CD4-positive, alpha-beta T cell (primary cell): ENCODE measurements at regions of chr3 and their contacts with region 1.

Region 1: DNA sequence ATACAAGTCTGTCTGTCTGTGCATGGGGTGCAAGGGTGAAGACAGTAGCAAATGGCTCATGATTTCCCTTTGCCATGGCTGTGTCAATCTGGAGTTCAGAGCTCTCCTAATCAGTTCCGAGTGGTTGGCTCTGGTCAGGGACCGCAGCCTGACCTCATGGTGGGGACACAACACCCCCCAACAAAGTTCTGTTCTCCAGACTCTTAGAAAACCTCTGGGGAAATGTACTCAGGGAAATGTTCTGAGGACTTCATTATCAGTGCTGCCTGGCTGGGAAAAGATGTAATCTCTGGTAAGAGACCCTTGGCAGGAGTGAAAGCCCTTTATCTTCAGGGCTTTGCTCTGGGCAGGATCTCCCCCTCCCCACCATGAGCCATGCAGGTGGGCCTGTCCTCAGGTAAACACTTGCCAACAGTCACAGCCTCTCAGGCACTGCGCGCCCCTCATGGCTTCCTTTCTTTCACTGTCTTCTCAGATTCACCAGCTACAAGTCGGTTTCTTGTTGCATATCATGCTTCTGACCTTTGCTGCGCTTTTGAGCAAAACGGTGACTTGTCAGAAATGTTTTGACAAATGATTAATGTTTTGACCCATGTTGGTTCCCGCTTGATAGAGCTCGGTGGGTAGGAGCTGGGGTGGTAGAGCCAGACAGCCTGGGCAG is 95.5 kb downstream of the ST6GAL1 start:
- DNase-seq: peak in 9 of 14 experiments; percentile 28 to 64 (median 38)
- ATAC-seq: peak; percentile 2
- H3K4me3 ChIP-seq: peak overlapping the region; percentile 72
- H3K4me3 Mint-ChIP-seq: peak overlapping the region; percentile 89
- H3K27ac ChIP-seq: peak overlapping the region; percentile 72 to 87
- H3K27ac Mint-ChIP-seq: peak overlapping the region; percentile 98
- H3K4me1 ChIP-seq: peaks cover 62% of the 10 kb centered on the region
- H3K4me1 Mint-ChIP-seq: peaks cover 69% of the 10 kb centered on the region
- H3K27me3 ChIP-seq: no peaks in the 10 kb centered on the region
- H3K27me3 Mint-ChIP-seq: no peaks in the 10 kb centered on the region
- CTCF ChIP-seq: no peak

Region 2: GRCh38 chr3:186514296-186515002 is 511.3 kb before region 1 on chr3:
- CTCF ChIA-PET with region 1: no interaction called
- POLR2A ChIA-PET with region 1: no interaction called
- intact Hi-C with region 1: no loop called
- DNase-seq: peak in 1 of 14 experiments; percentile 25
- ATAC-seq: no peak
- H3K4me3 ChIP-seq: no peak overlapping the region
- H3K4me3 Mint-ChIP-seq: no peak overlapping the region
- H3K27ac ChIP-seq: no peak overlapping the region
- H3K27ac Mint-ChIP-seq: peak overlapping the region; percentile 21
- H3K4me1 ChIP-seq: peaks cover 52% of the 10 kb centered on the region
- H3K4me1 Mint-ChIP-seq: peaks cover 63% of the 10 kb centered on the region
- H3K27me3 ChIP-seq: no peaks in the 10 kb centered on the region
- H3K27me3 Mint-ChIP-seq: no peaks in the 10 kb centered on the region
- CTCF ChIP-seq: no peak

Region 3: GRCh38 chr3:186849374-186849975 is 176.3 kb before region 1 on chr3:
- CTCF ChIA-PET with region 1: interaction called, 6 read pairs
- POLR2A ChIA-PET with region 1: interaction called, 15 read pairs
- intact Hi-C with region 1: loop called in 1 of 2 experiments (anchors 2 kb)
- DNase-seq: peak in 4 of 14 experiments; percentile 24 to 81 (median 76)
- ATAC-seq: peak; percentile 99
- H3K4me3 ChIP-seq: no peak overlapping the region
- H3K4me3 Mint-ChIP-seq: no peak overlapping the region
- H3K27ac ChIP-seq: no peak overlapping the region
- H3K27ac Mint-ChIP-seq: peak overlapping the region; percentile 1
- H3K4me1 ChIP-seq: peaks cover 3% of the 10 kb centered on the region
- H3K4me1 Mint-ChIP-seq: peaks cover 12% of the 10 kb centered on the region
- H3K27me3 ChIP-seq: peaks cover 0 to 4% of the 10 kb centered on the region in 2 experiments
- H3K27me3 Mint-ChIP-seq: peaks cover 5% of the 10 kb centered on the region
- CTCF ChIP-seq: peak; percentile 75

Region 4: GRCh38 chr3:187000711-187001151 is 25.1 kb before region 1 on chr3:
- CTCF ChIA-PET with region 1: interaction called, 3 read pairs
- POLR2A ChIA-PET with region 1: interaction called, 36 read pairs
- intact Hi-C with region 1: no loop called
- DNase-seq: peak in 3 of 14 experiments; percentile 36 to 47 (median 39)
- ATAC-seq: no peak
- H3K4me3 ChIP-seq: no peak overlapping the region
- H3K4me3 Mint-ChIP-seq: peak overlapping the region; percentile 11
- H3K27ac ChIP-seq: peak overlapping the region in 1 of 2 donors; percentile 18
- H3K27ac Mint-ChIP-seq: peak overlapping the region; percentile 72
- H3K4me1 ChIP-seq: peaks cover 40% of the 10 kb centered on the region
- H3K4me1 Mint-ChIP-seq: peaks cover 74% of the 10 kb centered on the region
- H3K27me3 ChIP-seq: no peaks in the 10 kb centered on the region
- H3K27me3 Mint-ChIP-seq: no peaks in the 10 kb centered on the region
- CTCF ChIP-seq: no peak

Region 5: GRCh38 chr3:187041362-187042307 is 15.8 kb after region 1 on chr3:
- CTCF ChIA-PET with region 1: interaction called, 17 read pairs
- POLR2A ChIA-PET with region 1: interaction called, 180 read pairs
- intact Hi-C with region 1: loop called (anchors 1 to 2 kb)
- DNase-seq: peak in 12 of 14 experiments; percentile 24 to 84 (median 54)
- ATAC-seq: peak; percentile 96
- H3K4me3 ChIP-seq: no peak overlapping the region
- H3K4me3 Mint-ChIP-seq: peak overlapping the region; percentile 40
- H3K27ac ChIP-seq: peak overlapping the region; percentile 75 to 84
- H3K27ac Mint-ChIP-seq: peak overlapping the region; percentile 93
- H3K4me1 ChIP-seq: peaks cover 70% of the 10 kb centered on the region
- H3K4me1 Mint-ChIP-seq: peaks cover 83% of the 10 kb centered on the region
- H3K27me3 ChIP-seq: no peaks in the 10 kb centered on the region
- H3K27me3 Mint-ChIP-seq: no peaks in the 10 kb centered on the region
- CTCF ChIP-seq: no peak

Region 6: DNA sequence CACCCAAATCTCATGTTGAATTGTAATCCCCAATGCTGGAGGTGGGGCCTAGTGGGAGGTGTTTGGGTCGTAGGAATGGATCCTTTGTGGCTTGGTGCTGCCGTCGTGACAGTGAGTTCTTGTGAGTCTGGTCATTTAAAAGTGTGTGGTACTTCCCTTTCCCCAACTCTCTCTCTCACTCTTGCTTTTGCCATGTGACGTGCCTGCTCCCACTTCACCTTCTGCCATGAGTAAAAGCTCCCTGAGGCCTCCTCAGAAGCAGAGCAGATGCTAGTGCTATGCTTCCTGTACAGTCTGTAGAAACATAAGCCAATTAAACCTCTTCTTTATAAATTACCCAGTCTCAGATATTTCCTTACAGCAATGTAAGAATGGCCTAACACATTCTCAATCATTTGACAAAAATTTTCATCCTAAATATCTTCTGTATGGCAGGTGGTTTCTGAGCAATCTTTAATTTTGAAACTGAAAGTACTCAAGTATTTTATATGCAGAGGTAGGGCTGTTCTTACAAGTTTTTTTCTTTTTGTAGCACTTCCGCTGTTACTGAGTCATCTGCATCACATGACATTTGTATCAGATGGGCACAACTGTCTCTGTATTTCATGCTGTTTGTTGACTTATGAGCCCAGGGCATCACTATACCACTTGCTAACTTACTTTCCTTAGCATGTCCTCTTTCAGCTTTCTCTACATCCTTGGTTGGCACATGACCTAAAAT is 104.7 kb after region 1 on chr3:
- CTCF ChIA-PET with region 1: no interaction called
- POLR2A ChIA-PET with region 1: interaction called, 11 read pairs
- intact Hi-C with region 1: loop called in 1 of 2 experiments (anchors 1 kb)
- DNase-seq: peak in 9 of 14 experiments; percentile 10 to 93 (median 24)
- ATAC-seq: peak; percentile 96
- H3K4me3 ChIP-seq: peak overlapping the region; percentile 22
- H3K4me3 Mint-ChIP-seq: peak overlapping the region; percentile 46
- H3K27ac ChIP-seq: peak overlapping the region; percentile 82 to 94
- H3K27ac Mint-ChIP-seq: peak overlapping the region; percentile 93
- H3K4me1 ChIP-seq: peaks cover 21% of the 10 kb centered on the region
- H3K4me1 Mint-ChIP-seq: peaks cover 27% of the 10 kb centered on the region
- H3K27me3 ChIP-seq: no peaks in the 10 kb centered on the region
- H3K27me3 Mint-ChIP-seq: no peaks in the 10 kb centered on the region
- CTCF ChIP-seq: no peak

Region 7: DNA sequence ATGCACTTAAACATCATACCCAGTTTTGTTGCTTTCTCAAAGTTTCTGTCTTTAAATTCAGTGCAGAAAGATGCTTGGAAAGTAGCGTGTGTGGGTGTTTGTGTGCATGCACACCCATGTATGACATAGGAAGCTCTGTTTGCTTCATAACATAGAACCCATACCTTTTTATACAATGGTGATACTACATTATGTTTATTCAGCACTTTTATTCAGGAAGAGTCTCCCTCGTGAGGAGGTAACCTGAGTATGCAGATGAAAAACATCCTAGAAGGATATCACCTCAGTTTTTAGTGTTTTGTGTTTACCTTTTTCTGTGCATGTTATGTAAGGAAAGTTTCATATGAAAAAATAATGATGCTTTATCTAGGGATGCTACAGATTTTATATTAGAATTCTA is 533.2 kb after region 1 on chr3:
- CTCF ChIA-PET with region 1: no interaction called
- POLR2A ChIA-PET with region 1: no interaction called
- intact Hi-C with region 1: no loop called
- DNase-seq: no peak
- ATAC-seq: no peak
- H3K4me3 ChIP-seq: no peak overlapping the region
- H3K4me3 Mint-ChIP-seq: no peak overlapping the region
- H3K27ac ChIP-seq: no peak overlapping the region
- H3K27ac Mint-ChIP-seq: no peak overlapping the region
- H3K4me1 ChIP-seq: no peaks in the 10 kb centered on the region
- H3K4me1 Mint-ChIP-seq: no peaks in the 10 kb centered on the region
- H3K27me3 ChIP-seq: peaks cover 0 to 8% of the 10 kb centered on the region in 2 experiments
- H3K27me3 Mint-ChIP-seq: peaks cover 6% of the 10 kb centered on the region
- CTCF ChIP-seq: no peak